ENCODE measurements at regions of chr2 and their contacts with region 1.

Region 1: DNA sequence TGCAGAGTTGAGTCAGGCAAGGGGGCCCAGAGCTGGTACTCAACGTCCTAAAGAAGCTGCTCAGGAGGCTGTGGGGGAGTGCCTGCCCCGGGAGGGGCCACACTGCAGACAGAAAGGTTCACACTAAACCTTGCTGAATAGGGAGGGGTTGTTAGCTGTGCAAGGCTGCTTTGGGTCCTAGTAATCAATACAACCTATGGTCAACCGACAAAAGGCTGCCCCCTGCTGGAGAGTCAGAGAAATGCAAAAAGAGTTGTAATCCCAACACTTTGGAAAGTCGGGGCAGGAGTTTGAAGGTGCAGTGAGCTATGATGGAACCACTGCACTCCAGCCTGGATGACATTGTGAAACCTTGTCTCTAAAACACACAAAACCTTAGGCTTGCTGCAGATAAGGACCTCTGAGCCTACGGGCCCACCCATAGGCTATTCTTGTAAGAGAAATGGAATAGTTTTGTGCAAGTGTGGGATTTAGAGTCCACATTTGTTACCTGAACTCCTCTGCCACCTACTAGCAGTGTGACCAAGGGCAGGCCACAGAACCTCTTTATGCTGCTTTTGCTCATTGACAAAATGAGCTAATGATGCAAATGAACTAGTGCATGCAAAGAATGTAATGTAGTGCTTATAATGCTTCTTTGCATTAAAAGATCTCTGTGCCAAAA is 81.5 kb downstream of the PRPF40A start:
- DNase-seq: peak; percentile 61
- H3K4me3 ChIP-seq: no peak overlapping the region
- H3K27ac ChIP-seq: no peak overlapping the region
- H3K4me1 ChIP-seq: no peaks in the 10 kb centered on the region
- H3K27me3 ChIP-seq: no peaks in the 10 kb centered on the region

Region 2: DNA sequence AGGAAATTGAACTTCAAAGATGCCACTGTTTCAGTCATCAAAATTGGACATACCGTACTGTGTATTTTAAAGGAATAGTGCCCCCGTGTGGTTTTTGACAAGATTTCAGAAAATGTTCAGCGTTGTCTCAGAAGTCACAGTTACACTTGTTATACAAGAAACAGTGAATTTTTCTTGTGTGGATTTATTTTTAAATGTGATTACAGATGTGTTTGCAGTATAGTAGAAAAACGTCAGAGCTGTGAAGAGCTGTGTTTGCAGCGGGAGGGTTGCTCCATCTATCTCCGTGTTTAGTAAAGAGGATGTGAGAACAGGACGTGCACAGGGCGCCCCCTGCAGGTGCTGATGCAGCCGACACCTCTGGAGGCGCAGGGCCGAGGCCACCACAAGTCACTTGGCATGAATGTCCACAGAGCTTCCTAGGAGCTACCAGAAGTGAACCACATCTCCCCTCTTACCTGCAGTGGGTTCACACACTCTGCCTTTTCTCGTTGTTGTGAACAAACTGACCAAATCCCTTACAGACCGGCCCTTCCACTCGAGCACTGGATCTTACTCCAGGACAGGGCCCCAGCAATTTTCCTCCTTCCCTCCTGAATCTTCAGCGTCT is 610.0 kb before region 1 on chr2:
- in situ Hi-C with region 1: loop called (anchors 25 kb)
- DNase-seq: peak; percentile 82
- H3K4me3 ChIP-seq: peak overlapping the region; percentile 71
- H3K27ac ChIP-seq: no peak overlapping the region
- H3K4me1 ChIP-seq: no peaks in the 10 kb centered on the region
- H3K27me3 ChIP-seq: peaks cover 17% of the 10 kb centered on the region

Region 3: GRCh38 chr2:152525277-152525838 is 110.4 kb before region 1 on chr2:
- in situ Hi-C with region 1: no loop called
- DNase-seq: peak; percentile 85
- H3K4me3 ChIP-seq: peak overlapping the region; percentile 42
- H3K27ac ChIP-seq: peak overlapping the region; percentile 64
- H3K4me1 ChIP-seq: peaks cover 38% of the 10 kb centered on the region
- H3K27me3 ChIP-seq: no peaks in the 10 kb centered on the region

Region 4: DNA sequence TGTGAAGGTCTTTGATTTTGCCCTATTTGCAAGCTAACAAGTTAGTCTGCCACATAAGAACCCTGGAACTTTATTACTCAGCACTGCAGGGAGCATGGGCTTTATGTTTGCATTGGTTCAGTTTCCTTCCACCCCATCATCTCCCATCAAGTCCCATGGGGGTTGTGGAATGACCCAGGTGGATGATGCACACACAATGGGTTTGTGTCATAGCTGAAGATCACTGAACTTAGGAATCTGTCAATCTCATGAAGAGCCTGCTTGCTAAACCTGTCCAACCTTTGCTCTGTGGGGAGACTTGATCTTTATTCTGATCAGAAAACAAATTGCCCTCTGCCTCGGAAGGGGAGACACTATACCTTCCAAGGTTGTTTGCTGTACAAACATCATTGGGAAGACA is 577.3 kb after region 1 on chr2:
- in situ Hi-C with region 1: no loop called
- DNase-seq: no peak
- H3K4me3 ChIP-seq: no peak overlapping the region
- H3K27ac ChIP-seq: no peak overlapping the region
- H3K4me1 ChIP-seq: no peaks in the 10 kb centered on the region
- H3K27me3 ChIP-seq: no peaks in the 10 kb centered on the region

Measured in GM23248 (cell line).